RWPE1 (cell line): ENCODE measurements at regions of chr2 and their contacts with region 1.

Region 1: GRCh38 chr2:160429248-160430000 is 64.2 kb downstream of the RBMS1 start:
- DNase-seq: no peak
- H3K27ac ChIP-seq: peak overlapping the region; percentile 44; the same call in 1 of the 2 replicates
- CTCF ChIP-seq: peak; percentile 69

Region 2: GRCh38 chr2:160417745-160418397 is 11.6 kb before region 1 on chr2:
- CTCF ChIA-PET with region 1: interaction called, 10 read pairs
- POLR2A ChIA-PET with region 1: no interaction called
- DNase-seq: no peak
- H3K27ac ChIP-seq: no peak overlapping the region
- CTCF ChIP-seq: no peak

Region 3: GRCh38 chr2:160532388-160532787 is 103.0 kb after region 1 on chr2:
- CTCF ChIA-PET with region 1: no interaction called
- POLR2A ChIA-PET with region 1: no interaction called
- DNase-seq: no peak
- H3K27ac ChIP-seq: no peak overlapping the region
- CTCF ChIP-seq: no peak

Region 4: GRCh38 chr2:160803881-160804280 is 374.5 kb after region 1 on chr2:
- CTCF ChIA-PET with region 1: no interaction called
- POLR2A ChIA-PET with region 1: no interaction called
- DNase-seq: no peak
- H3K27ac ChIP-seq: no peak overlapping the region
- CTCF ChIP-seq: no peak

Region 5: GRCh38 chr2:160970052-160970965 is 540.9 kb after region 1 on chr2:
- CTCF ChIA-PET with region 1: interaction called, 12 read pairs
- POLR2A ChIA-PET with region 1: no interaction called
- DNase-seq: peak; percentile 72
- H3K27ac ChIP-seq: peak overlapping the region; percentile 22; the same call in 1 of the 2 replicates
- CTCF ChIP-seq: peak; percentile 88